ENCODE measurements at regions of chr20 and their contacts with region 1.

Region 1: DNA sequence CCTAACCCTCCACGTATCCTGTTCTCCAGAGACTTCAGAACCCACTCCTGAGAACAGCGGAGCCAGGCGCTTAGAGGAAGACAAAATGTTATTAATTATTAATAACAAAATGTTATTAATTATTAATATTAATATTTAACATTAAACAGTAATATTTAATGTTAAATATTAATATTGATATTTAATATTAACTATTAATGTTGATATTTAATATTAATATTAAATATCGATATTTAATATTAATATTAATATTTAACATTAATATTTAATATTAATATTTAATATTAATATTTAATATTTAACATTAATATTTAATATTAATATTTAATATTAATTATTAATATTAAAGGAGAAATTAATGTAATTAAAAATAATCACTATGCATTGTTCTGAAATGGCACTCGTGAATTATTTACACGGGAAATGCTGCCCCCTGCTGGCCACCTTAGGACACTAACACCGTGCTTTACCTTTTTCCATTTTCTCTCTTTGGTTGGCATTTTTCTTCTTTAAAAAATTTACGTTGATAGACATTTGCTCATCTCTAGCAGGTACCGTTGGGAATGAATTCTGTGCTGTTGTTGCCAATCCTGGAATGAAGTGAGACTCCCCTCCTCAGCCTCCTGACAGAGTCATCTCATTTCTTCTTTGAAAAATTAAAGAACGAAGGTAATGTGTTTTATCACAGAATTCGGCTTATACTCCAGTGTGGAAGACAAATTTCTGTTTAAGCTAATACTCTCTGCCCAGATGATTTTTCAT is 7.5 kb upstream of the GGTLC1 start:
- DNase-seq: peak; percentile 69

Region 2: DNA sequence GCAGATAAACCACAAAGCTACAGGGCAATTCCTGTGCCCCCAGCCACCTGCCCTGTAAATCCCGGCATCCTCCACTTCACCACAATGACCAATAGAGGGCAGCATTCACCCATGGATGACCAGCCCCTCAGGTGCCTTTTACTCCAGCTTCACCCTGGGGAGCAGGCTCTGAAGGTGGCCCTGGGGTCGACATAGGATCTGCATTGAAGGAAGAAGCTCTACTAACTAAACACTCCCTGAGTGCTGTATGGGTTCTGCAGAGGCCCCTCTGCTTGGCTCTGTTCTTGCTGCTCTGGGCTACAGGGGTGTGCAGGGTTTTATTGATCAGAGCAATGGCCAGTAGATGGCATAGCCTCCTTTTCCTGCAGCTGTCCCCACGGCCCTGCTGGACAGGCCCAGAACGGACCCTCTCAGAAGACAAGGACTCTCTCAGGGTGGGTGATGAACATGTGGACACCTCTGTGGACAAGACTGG is 327.6 kb before region 1 on chr20:
- intact Hi-C with region 1: loop called (anchors 5 kb)
- DNase-seq: no peak

Region 3: GRCh38 chr20:23932256-23932655 is 63.8 kb before region 1 on chr20:
- intact Hi-C with region 1: loop called (anchors 5 kb)
- DNase-seq: no peak

Region 4: DNA sequence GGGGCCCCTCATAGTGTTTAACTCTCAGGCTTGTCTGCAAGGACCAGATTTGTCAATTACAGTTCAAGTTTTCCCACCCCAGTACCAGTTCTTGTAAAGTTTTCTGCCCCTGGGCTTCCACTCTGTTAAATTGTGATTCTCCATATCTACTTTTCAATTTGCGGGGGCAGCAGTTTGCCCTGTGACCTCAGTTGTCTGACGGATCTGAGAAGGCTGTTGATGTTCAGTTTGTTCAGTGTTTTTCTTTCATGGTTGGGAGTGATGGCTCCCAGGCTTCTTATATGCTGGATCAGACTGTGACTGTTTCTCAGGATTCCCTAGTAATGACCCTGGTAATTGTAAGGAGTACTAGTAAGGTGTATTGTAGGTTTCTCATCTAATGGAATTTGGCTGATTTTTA is 93.5 kb after region 1 on chr20:
- intact Hi-C with region 1: no loop called
- DNase-seq: no peak

Region 5: DNA sequence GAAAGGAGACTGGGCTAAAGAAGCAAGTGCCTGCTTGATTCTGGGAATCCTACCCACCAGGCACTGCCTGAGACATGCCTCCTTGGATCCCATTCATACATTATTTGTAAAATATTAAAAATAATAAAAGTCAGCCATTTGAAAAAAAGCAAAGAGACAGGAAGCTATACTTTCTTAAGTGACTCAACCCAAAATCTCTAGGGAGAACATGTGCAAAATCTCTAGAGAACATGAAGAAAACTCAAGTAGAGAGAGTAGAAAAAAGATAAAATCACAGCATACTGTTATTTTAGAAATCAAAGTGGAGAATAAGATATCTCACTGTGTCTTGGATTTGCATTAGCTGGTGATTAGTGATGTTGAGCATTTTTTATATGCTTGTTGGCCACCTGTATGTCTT is 189.7 kb after region 1 on chr20:
- intact Hi-C with region 1: no loop called
- DNase-seq: no peak